BJ (cell line): ENCODE measurements at regions of chr6 and their contacts with region 1.

Region 1: GRCh38 chr6:135535989-135536414 is 38.5 kb upstream of the AHI1 start:
- DNase-seq: peak; percentile 51
- H3K4me3 ChIP-seq: no peak overlapping the region
- H3K27me3 ChIP-seq: no peaks in the 10 kb centered on the region
- CTCF ChIP-seq: peak; percentile 58

Region 2: DNA sequence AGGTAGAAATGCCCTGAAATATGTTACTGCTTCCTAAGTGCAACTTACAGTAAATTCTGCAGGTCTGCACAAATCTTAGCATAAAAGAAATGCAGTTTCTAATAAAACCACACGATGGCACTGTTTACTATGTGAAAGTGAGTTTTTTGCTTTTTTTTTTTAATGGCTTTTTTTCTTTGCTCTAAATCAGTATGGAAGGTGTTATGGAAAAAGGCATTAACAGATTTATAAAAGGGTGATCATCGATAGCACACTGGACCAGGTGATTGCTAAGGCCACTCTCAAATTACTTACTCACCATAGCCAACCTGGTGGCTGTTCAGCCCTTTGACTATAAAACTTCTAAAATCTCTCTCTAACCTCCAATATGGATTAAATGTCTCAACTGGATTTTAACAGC is 84.3 kb before region 1 on chr6:
- CTCF ChIA-PET with region 1: interaction called, 16 read pairs
- POLR2A ChIA-PET with region 1: no interaction called
- DNase-seq: no peak
- H3K4me3 ChIP-seq: no peak overlapping the region
- H3K27me3 ChIP-seq: no peaks in the 10 kb centered on the region
- CTCF ChIP-seq: peak; percentile 54

Region 3: DNA sequence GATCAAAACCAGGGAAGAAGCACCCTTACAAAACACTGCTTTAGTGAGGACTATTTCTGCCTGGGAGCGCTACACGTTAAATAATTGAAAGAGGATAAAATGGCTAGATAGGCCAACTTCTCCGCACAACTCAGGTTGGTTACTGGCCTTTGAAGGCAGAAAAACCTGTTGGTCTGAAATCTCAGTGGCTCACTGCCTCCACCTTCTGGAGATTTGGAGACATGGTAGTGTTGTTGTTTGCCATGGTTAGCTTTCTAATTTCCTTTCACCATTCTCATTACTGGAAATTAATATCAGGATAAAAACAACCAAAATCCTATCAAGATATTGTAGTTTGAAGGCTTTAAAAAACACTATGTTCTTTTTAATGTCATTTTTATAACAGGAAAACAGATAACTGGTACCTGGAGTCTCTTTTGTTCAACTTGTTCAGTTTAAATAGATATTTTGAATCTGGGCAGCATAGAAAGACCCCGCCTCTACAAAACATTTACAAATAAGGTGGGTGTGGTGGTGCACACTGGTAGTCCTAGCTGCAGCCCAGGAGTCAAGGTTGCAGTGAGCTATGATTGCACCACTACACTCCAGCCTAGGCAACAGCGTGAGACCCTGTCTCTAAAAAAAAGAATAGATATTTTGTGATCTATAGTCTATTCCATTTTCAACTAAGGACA is 781.2 kb after region 1 on chr6:
- CTCF ChIA-PET with region 1: interaction called, 17 read pairs
- POLR2A ChIA-PET with region 1: no interaction called
- DNase-seq: no peak
- H3K4me3 ChIP-seq: no peak overlapping the region
- H3K27me3 ChIP-seq: no peaks in the 10 kb centered on the region; the same call in 1 of the 2 replicates
- CTCF ChIP-seq: peak; percentile 84